Psoas muscle (tissue), 8 donors: ENCODE measurements at regions of chr14 and their contacts with region 1.

Region 1: DNA sequence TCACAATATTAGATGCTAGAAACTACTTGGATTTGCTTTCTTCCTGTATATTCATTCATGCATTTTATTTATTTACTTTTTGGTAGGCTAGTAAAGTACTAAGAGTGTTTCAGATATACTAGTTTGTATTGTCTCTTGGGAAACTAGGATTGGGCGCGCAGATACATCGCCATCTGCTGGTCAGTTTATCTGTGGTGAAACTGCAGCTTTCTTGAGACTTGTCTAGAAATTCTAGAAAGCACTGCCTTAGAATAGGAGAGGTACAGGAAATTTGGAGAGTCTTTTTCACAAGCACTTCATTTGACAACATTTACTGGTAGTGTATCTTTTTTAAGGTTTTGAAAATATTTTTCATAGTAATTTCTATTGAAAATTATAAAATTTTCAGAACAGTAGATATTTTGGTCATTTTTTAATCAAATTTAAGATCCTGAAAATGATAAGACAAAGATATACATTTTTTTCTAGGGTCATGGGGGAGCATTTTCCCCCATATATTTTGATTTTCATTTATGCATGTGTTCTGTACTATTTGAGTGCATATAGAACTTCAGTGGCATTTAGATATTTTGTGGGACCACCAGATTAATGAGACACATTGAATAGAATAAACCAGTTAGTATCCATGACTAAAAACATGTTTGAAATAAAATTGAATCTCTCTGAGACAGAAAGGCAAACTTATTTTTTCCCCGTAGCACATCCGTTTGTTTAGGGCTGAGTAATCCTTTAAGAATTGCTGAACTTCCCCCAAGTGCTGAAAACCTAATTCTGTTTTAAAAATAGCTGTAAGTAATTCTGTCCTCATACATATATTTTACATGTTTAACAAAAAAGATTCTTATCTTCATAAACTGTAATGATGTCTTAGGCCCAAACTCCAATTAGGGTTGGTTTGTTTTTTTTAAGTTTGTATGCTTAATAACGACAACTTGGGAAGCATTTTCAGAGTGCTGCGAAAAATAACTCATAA is 44.5 kb downstream of the SLC38A6 start:
- DNase-seq: peak; percentile 28 to 60
- ATAC-seq: peak; percentile 64 to 93 (median 78)
- H3K4me3 ChIP-seq: no peak overlapping the region
- H3K27ac ChIP-seq: no peak overlapping the region
- H3K4me1 ChIP-seq: peaks cover 25% of the 10 kb centered on the region
- H3K27me3 ChIP-seq: no peaks in the 10 kb centered on the region
- CTCF ChIP-seq: peak; percentile 94

Region 2: DNA sequence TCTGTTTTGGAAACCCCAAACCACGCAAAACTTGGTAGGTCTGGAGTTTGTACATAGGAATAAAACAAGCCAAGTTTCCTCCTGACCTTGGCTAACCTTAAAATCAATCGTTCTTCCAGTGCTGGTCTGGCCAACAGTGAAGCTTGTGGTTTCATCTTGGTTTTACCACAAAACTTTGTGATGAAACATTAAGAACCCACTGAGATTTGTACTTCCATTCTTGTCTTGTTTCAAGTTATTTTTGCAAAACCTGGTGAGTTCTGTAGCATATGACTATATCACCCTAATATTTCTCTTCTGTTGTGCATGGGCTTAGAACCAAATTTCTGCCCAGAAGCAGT is 402.6 kb before region 1 on chr14:
- intact Hi-C with region 1: loop called (anchors 2 to 5 kb)
- DNase-seq: no peak
- ATAC-seq: no peak
- H3K4me3 ChIP-seq: no peak overlapping the region
- H3K27ac ChIP-seq: no peak overlapping the region
- H3K4me1 ChIP-seq: peaks cover 18% of the 10 kb centered on the region
- H3K27me3 ChIP-seq: no peaks in the 10 kb centered on the region
- CTCF ChIP-seq: no peak

Region 3: DNA sequence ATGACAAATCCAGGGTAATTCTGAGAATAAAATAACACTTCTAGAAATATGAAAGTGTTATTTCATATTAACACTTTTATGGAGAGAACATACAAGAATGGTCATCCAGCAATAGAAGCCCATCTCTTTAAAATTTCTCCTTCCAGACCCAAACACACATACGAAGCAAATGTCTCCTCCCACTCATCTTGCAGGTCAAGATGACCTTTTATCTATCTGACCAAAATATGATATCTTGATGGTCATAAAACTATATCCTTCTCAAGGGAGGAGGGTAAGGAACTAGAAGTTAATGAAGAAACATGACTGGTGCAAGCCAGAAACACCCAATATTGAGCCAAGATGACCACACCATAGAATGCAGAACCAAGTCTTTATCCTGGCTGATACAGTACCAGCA is 397.3 kb before region 1 on chr14:
- intact Hi-C with region 1: loop called (anchors 2 to 5 kb)
- DNase-seq: no peak
- ATAC-seq: no peak
- H3K4me3 ChIP-seq: no peak overlapping the region
- H3K27ac ChIP-seq: peak overlapping the region; percentile 54
- H3K4me1 ChIP-seq: peaks cover 35% of the 10 kb centered on the region
- H3K27me3 ChIP-seq: no peaks in the 10 kb centered on the region
- CTCF ChIP-seq: no peak

Region 4: DNA sequence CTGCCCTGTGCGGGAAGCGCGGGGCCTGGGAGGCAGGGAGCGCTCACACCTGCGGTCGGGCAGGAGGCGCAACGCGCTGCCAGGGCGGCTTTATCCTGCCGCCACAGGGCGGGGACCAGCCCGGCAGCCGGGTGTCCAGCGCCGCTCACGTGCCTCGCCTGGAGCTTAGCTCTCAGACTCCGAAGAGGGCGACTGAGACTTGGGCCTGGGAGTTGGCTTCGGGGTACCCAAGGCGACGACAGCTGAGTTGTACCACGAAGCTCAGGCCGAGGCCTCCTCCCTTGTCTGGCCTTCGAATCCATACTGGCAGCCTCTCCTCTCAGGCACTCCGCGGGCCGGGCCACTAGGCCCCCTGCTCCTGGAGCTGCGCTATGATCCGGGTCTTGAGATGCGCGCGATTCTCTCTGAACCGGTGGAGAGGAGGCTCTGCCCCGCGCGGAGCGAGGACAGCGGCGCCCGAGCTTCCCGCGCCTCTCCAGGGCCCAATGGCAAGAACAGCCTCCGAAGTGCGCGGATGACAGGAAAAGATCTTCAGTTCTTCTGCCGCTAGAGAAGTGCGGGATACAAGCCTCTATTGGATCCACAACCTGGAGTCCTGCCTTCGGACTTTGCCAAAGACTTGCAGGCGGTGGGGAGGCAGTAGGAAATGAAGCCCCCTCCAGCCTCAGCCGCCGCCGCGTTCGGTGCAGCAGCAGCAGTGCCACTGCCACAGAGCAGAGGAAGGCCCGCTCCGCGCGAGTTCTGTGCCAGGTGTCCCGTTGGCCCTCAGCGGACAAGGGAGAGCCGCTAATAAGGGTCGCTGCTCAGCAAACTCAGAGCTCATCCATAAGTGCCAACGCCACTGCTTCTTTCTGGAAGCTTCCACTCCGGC is 383.0 kb before region 1 on chr14:
- intact Hi-C with region 1: loop called in 1 of 2 experiments (anchors 5 kb)
- DNase-seq: peak; percentile 39 to 81
- ATAC-seq: peak; percentile 67 to 76 (median 68)
- H3K4me3 ChIP-seq: peak overlapping the region; percentile 91
- H3K27ac ChIP-seq: peak overlapping the region; percentile 93
- H3K4me1 ChIP-seq: peaks cover 48% of the 10 kb centered on the region
- H3K27me3 ChIP-seq: no peaks in the 10 kb centered on the region
- CTCF ChIP-seq: no peak

Region 5: GRCh38 chr14:60656686-60657455 is 368.7 kb before region 1 on chr14:
- intact Hi-C with region 1: loop called in 1 of 2 experiments (anchors 10 kb)
- DNase-seq: peak; percentile 71 to 88
- ATAC-seq: peak; percentile 72 to 78 (median 76)
- H3K4me3 ChIP-seq: peak overlapping the region; percentile 91
- H3K27ac ChIP-seq: peak overlapping the region; percentile 93
- H3K4me1 ChIP-seq: peaks cover 13% of the 10 kb centered on the region
- H3K27me3 ChIP-seq: no peaks in the 10 kb centered on the region
- CTCF ChIP-seq: peak; percentile 46

Region 6: DNA sequence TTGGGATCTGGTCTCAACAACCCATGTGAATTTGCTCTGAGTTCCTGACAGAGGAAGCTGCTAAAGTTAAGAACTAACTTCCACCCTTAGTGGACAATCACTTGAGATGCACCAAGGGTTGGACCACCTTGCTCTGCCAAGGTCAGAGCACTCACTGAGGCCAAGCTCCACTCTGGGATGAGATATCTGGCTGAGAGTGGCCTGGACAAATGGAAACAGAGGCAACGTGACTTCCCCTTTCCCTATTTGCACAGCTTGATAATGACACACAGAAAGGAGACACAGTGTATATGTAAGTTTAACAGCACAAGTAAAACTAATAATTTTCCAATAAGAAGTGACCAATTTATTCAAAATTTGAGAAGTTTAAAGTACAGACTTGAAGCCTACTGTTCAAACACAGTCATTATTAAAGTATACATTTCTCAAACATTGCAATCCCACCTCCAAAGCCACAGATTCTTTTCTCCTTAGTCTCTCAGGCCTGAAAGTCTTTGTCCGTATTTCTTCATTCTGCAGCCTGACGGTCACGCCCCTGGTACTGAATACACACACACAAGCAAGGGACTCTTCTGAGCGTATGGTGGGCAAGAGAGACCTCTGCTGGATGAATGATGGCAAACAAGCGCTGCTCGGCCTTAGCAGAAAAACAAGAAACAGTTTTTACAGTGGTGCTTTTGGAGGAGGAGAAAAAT is 227.0 kb after region 1 on chr14:
- intact Hi-C with region 1: loop called (anchors 5 to 10 kb)
- DNase-seq: peak; percentile 68 to 79
- ATAC-seq: peak; percentile 89 to 94 (median 92)
- H3K4me3 ChIP-seq: peak overlapping the region; percentile 19
- H3K27ac ChIP-seq: peak overlapping the region; percentile 72
- H3K4me1 ChIP-seq: peaks cover 41% of the 10 kb centered on the region
- H3K27me3 ChIP-seq: no peaks in the 10 kb centered on the region
- CTCF ChIP-seq: peak; percentile 88